ENCODE measurements at regions of chr5 and their contacts with region 1.

Region 1: DNA sequence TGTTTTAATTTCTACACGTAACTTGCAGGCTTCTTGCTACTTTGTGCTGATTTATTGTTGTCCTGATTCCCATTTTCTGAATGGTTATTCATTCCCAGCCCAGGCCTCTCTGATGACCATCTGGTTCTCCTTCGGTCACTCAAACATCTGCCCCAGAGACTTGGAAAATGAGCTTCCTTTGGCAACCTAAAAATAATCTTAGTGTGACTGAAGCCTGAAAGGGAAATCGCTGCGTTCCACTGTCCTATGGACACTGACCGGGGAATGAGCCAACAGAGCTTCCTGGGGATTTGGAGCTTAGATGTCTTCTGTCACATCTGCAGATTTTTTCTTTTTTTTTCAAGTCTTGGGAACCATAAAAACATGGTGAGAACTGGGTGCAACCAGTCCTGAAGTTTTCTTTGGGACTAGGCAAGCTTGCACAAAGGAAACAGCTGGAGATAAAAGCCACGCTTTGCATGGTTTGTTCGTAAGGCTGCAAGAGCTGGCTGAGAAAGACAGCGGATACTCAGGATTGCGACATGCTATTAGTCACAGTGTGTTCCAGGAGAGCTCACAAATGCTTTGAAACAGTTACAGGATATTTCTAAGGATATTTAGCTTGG is 146.3 kb downstream of the GOLPH3 start:
- DNase-seq: peak; percentile 75
- ATAC-seq: peak; percentile 93

Region 2: DNA sequence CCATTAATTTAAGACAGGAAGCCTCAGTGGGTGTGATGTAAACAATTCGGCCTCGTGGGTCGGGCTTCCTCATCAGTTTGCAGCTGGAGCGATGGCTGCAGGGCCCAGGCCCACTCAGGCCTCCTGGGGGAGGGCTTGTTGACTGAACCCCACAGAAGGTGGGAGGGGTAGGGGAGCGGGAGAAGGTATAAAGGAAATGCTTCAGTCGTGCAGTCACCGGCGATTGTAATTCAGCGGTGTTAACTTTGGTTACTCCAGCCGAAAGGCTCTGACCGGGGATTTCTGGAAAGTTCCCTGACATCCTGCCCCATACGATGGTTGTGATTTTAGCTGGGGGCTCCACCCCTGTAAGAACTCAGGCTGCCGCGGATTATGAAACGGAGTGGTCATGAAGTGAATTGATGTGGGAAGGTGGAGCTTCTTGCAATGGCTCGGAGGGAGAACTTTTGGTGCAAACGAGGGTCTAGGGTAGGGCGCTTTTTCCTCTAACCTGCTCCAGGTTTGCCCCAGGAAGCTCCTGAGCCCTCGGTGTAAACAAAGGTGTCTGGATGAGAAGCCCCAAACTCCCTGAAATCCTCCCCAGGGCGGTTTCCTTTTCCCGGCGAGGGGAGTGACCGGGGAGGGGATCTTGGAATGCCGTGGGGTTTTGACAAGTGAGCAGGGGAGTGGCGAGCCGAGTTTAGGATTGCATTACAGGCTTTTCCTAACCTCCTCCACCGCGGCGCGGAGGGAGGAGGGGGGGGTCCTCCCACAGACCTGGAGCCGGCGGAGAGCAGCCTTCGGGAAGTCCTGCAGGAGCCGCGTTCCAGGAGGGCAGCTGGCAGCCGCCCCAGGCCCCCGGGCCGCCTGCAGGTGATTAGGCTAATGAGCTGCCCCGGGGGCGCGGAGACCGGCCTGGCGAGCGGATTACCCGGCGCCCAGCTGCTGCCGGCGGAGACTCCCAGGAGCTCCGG is 173.4 kb before region 1 on chr5:
- intact Hi-C with region 1: loop called (anchors 10 kb)
- DNase-seq: peak; percentile 76
- ATAC-seq: peak; percentile 58

Region 3: DNA sequence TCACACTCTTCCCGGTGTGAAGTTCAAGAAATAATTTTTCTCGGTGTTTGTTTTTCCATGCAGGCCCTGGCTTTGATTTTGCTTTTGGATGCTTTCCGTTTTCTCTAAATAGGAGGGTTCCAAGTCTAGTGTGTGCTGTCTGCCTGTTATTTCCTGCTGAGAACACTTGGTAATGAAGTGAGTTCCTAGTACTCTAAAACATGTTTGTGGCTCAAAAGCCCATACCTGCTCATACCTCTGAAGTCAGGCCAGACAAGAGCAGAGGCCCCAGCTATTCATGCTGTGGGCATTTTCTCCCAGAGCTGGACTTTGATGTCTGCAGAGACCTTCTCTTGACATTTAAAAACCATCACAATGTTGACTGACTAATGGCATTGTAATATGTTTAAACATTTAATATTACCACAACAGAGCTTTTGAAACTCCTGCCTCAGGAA is 64.9 kb before region 1 on chr5:
- intact Hi-C with region 1: loop called (anchors 5 kb)
- DNase-seq: no peak
- ATAC-seq: peak; percentile 14

Measured in Right ventricle myocardium inferior (tissue), 1 donor.